Dorsolateral prefrontal cortex (tissue), 120 donors: ENCODE measurements at regions of chr1 and their contacts with region 1.

Region 1: GRCh38 chr1:205584732-205585131 is 47.1 kb downstream of the ELK4 start:
- DNase-seq: no peak
- H3K4me3 ChIP-seq: no peak overlapping the region
- H3K27ac ChIP-seq: no peak overlapping the region
- H3K27me3 ChIP-seq: no peaks in the 10 kb centered on the region
- CTCF ChIP-seq: peak in 48 of 56 donors; percentile 15 to 58 (median 39)

Region 2: DNA sequence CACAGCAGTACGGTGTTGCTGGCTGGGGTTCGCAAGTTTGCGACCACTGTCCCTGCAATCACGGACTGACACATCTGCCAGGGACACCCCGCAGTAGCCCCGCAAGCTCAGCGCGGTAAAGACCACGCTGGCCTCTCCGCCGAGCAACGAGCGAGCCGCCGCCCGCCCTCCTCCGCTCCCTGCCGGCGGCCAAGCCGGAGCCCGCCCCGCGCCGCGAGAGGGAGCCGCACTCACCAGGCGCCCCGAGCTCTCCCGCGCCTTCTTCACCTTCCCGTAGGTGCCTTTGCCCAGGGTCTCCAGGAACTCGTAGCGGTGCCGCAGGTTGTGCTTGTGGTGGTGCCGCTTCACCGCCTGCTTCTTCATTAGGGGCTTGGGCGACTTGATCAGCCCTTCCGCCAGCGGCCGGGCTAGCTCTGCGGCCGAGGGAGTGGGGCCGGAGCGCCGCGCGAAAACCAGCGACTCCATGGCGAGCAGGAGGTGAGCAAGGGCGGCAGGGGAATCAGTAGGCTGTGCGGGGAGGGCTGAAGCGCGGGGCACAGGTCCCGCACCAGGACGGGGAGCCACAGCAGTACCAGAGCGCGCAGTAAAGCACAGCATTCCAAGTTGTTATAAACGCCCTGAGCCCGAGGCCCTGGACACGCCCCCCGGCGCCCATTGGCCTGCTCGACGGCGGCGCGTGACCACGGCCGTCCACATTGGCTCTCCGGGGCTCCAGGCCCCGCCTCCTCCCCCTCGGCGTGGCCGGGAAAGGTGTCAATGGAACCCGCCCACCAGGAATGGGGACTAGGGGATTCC is 263.4 kb before region 1 on chr1 and contains the start of gene NUAK2:
- intact Hi-C with region 1: no loop called
- DNase-seq: peak; percentile 91 to 97 (median 93)
- H3K4me3 ChIP-seq: peak within 1 kb of the TSS; percentile 49 to 95 (median 85)
- H3K27ac ChIP-seq: peak within 1 kb of the TSS in 53 of 59 donors; percentile 18 to 93 (median 78)
- H3K27me3 ChIP-seq: peaks cover 0 to 4% (median 0%) of the 10 kb centered on the region in 45 donors
- CTCF ChIP-seq: peak in 49 of 56 donors; percentile 8 to 61 (median 39)
- total RNA-seq, gene NUAK2: 0.55 to 5.2 (median 1.7) TPM

Region 3: GRCh38 chr1:205543411-205544301 is 41.1 kb before region 1 on chr1:
- intact Hi-C with region 1: loop called in 1 of 2 experiments (anchors 5 kb)
- DNase-seq: peak; percentile 58 to 92 (median 84)
- H3K4me3 ChIP-seq: peak overlapping the region; percentile 26 to 66 (median 52)
- H3K27ac ChIP-seq: peak overlapping the region in 52 of 59 donors; percentile 9 to 84 (median 70)
- H3K27me3 ChIP-seq: no peaks in the 10 kb centered on the region
- CTCF ChIP-seq: peak in 10 of 56 donors; percentile 1 to 31 (median 16)

Region 4: GRCh38 chr1:205600085-205600484 is 15.4 kb after region 1 on chr1:
- intact Hi-C with region 1: no loop called
- DNase-seq: no peak
- H3K4me3 ChIP-seq: no peak overlapping the region
- H3K27ac ChIP-seq: peak overlapping the region in 40 of 59 donors; percentile 0 to 80 (median 54)
- H3K27me3 ChIP-seq: no peaks in the 10 kb centered on the region
- CTCF ChIP-seq: no peak